ENCODE measurements at regions of chr11 and their contacts with region 1.

Region 1: DNA sequence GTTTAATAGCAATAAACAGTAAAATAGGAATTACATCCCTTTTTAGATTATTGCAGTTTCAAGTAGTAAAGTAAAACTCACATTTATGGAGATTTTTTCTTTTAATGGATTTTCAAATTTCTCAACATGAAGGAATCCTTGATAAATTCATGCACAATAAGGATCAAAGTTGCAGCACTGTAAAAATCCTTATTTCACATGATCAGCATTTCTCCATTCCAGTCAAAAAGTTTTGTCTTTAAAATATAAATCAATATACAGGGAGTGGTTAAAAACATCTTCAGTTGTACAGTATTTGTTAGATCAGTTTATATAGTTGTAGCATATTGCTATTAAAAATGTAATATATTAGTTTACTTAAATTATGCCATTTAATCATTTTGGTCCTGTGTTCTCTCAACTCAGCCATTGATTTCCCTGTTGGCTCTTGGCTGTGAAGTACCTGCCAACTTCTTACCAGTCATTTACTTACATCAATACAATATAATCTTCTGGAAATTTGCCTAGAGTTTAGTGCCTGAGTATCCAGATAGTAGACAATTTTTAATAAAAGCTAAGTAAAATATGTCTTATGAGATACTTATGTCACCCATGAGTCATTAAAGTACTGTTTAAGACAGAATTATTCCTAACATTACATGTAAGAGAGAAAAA is 12.1 kb downstream of the ELP4 start:
- DNase-seq: no peak
- H3K4me3 ChIP-seq: no peak overlapping the region
- H3K27ac ChIP-seq: no peak overlapping the region
- H3K4me1 ChIP-seq: no peaks in the 10 kb centered on the region
- H3K27me3 ChIP-seq: no peaks in the 10 kb centered on the region
- CTCF ChIP-seq: no peak
- EP300 ChIP-seq: no peak
- POLR2A ChIP-seq: no peak

Region 2: DNA sequence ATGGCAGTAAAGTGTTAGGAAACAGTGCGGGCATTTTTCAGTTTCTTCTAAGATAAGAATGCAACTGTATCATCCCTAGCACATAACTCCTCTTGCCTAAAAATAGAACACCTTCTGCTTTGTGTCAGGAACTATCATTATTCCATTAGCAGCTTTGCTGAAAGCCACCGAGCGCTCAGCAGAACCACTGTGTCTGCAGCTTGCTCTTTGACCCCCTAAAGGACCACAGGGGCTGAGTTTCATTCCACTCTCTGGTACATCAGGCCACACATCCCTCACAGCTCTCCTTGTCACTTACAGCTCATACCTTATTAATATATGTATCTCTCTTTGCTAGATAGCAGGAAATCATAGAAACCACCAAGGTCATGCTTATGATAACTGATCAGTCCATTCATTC is 1865.0 kb before region 1 on chr11:
- intact Hi-C with region 1: no loop called
- DNase-seq: no peak
- H3K4me3 ChIP-seq: no peak overlapping the region
- H3K27ac ChIP-seq: no peak overlapping the region
- H3K4me1 ChIP-seq: no peaks in the 10 kb centered on the region
- H3K27me3 ChIP-seq: no peaks in the 10 kb centered on the region
- CTCF ChIP-seq: no peak
- EP300 ChIP-seq: no peak
- POLR2A ChIP-seq: no peak

Region 3: GRCh38 chr11:31535479-31535878 is 13.9 kb after region 1 on chr11:
- intact Hi-C with region 1: loop called in 1 of 4 experiments (anchors 1 kb)
- DNase-seq: no peak
- H3K4me3 ChIP-seq: no peak overlapping the region
- H3K27ac ChIP-seq: no peak overlapping the region
- H3K4me1 ChIP-seq: no peaks in the 10 kb centered on the region
- H3K27me3 ChIP-seq: no peaks in the 10 kb centered on the region
- CTCF ChIP-seq: no peak
- EP300 ChIP-seq: no peak
- POLR2A ChIP-seq: no peak